CD4-positive, alpha-beta memory T cell (primary cell): ENCODE measurements at regions of chr3 and their contacts with region 1.

Region 1: GRCh38 chr3:123258811-123259420 is 57.2 kb downstream of the SEC22A start:
- DNase-seq: peak in 4 of 5 donors; percentile 7 to 24 (median 12)
- H3K4me3 ChIP-seq: no peak overlapping the region
- H3K4me3 Mint-ChIP-seq: no peak overlapping the region
- H3K27ac ChIP-seq: no peak overlapping the region
- H3K27ac Mint-ChIP-seq: peak overlapping the region in 3 of 7 donors; percentile 8 to 65 (median 46)
- H3K4me1 ChIP-seq: no peaks in the 10 kb centered on the region
- H3K4me1 Mint-ChIP-seq: peaks cover 0 to 4% (median 2%) of the 10 kb centered on the region in 4 donors
- H3K27me3 ChIP-seq: no peaks in the 10 kb centered on the region
- H3K27me3 Mint-ChIP-seq: no peaks in the 10 kb centered on the region

Region 2: GRCh38 chr3:122754929-122755328 is 504.0 kb before region 1 on chr3:
- CTCF ChIA-PET with region 1: no interaction called
- POLR2A ChIA-PET with region 1: no interaction called
- intact Hi-C with region 1: loop called (anchors 2 kb)
- DNase-seq: peak in 4 of 5 donors; percentile 33 to 52 (median 46)
- H3K4me3 ChIP-seq: no peak overlapping the region
- H3K4me3 Mint-ChIP-seq: no peak overlapping the region
- H3K27ac ChIP-seq: no peak overlapping the region
- H3K27ac Mint-ChIP-seq: peak overlapping the region in 1 of 7 donors; percentile 24
- H3K4me1 ChIP-seq: no peaks in the 10 kb centered on the region
- H3K4me1 Mint-ChIP-seq: peaks cover 0 to 3% (median under 1%) of the 10 kb centered on the region in 4 donors
- H3K27me3 ChIP-seq: no peaks in the 10 kb centered on the region
- H3K27me3 Mint-ChIP-seq: no peaks in the 10 kb centered on the region

Region 3: DNA sequence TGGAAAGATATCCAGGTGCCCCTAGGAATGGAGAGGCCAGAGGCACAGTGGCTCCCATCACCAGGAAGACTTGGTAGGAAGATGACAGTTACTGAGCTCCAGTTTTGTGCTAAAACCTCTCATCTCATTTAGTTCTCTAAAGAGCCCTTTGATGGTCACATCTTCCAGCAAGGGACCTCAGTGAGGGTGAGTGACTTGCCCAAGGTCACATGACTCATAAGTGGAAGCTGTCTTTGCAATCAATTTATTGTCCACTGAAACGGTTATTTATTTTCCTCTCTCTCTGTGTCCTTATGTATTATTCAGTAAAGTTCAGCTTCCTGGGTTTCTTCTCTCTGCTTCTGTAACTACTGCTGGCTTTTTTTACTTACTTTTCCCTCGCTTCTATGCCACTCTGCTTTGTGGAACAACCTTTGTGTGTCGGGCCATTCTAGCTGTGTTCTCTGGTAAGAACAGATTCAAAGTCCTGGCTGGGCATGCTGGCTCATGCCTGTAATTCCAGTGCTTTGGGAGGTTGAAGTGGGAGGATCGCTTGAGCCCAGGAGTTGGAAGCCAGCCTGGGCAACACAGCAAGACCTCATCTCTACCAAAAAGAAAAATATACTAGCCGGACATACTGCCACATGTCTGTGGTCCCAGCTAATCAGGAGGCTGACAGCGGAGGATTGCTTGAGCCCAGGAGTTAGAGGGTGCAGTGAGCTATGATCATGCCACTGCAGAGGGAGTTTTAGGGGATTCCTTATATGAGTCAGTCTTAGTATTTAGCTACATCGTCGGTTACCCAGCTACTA is 136.2 kb before region 1 on chr3:
- CTCF ChIA-PET with region 1: no interaction called
- POLR2A ChIA-PET with region 1: no interaction called
- intact Hi-C with region 1: no loop called
- DNase-seq: no peak
- H3K4me3 ChIP-seq: no peak overlapping the region
- H3K4me3 Mint-ChIP-seq: no peak overlapping the region
- H3K27ac ChIP-seq: no peak overlapping the region
- H3K27ac Mint-ChIP-seq: peak overlapping the region in 2 of 7 donors; percentile 19 to 62
- H3K4me1 ChIP-seq: no peaks in the 10 kb centered on the region
- H3K4me1 Mint-ChIP-seq: no peaks in the 10 kb centered on the region
- H3K27me3 ChIP-seq: no peaks in the 10 kb centered on the region
- H3K27me3 Mint-ChIP-seq: no peaks in the 10 kb centered on the region

Region 4: DNA sequence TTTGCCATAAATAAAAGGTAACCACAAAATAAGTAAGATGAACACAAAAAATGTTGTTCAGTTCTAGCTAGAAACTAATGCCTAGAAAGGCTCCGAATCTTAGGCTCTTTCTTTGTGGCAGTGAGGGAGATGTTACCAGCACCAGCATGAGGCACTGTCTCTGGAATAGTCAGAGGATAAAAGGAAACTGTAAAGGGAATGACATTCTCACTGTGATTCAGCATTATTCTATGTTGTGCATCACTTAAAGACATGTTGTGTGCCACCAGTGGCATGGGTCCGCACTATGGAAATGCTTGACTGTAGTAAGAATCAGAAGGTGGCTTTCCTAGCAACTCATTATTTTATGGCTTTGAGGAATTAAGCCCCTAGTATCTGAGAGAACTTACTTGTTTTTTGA is 13.6 kb after region 1 on chr3:
- CTCF ChIA-PET with region 1: no interaction called
- POLR2A ChIA-PET with region 1: no interaction called
- intact Hi-C with region 1: no loop called
- DNase-seq: no peak
- H3K4me3 ChIP-seq: no peak overlapping the region
- H3K4me3 Mint-ChIP-seq: no peak overlapping the region
- H3K27ac ChIP-seq: no peak overlapping the region
- H3K27ac Mint-ChIP-seq: no peak overlapping the region
- H3K4me1 ChIP-seq: no peaks in the 10 kb centered on the region
- H3K4me1 Mint-ChIP-seq: peaks cover 0 to 4% (median under 1%) of the 10 kb centered on the region in 4 donors
- H3K27me3 ChIP-seq: no peaks in the 10 kb centered on the region
- H3K27me3 Mint-ChIP-seq: no peaks in the 10 kb centered on the region